Activated CD4-positive, alpha-beta memory T cell treated with anti-CD3 and anti-CD28 coated beads, Interleukin-2, amount 10 ng/mL, durations not matched to agents 7 days and 5 days (primary cell): ENCODE measurements at regions of chr5 and their contacts with region 1.

Region 1: GRCh38 chr5:140346348-140347101 is at the start of gene HBEGF:
- DNase-seq: peak; percentile 63
- H3K4me3 Mint-ChIP-seq: peak within 1 kb of the TSS; percentile 96
- H3K27ac Mint-ChIP-seq: peak within 1 kb of the TSS; percentile 94
- H3K4me1 Mint-ChIP-seq: peaks cover 64% of the 10 kb centered on the region
- H3K27me3 Mint-ChIP-seq: peaks cover 3% of the 10 kb centered on the region
- total RNA-seq, gene HBEGF: 67.9 to 69.1 TPM

Region 2: DNA sequence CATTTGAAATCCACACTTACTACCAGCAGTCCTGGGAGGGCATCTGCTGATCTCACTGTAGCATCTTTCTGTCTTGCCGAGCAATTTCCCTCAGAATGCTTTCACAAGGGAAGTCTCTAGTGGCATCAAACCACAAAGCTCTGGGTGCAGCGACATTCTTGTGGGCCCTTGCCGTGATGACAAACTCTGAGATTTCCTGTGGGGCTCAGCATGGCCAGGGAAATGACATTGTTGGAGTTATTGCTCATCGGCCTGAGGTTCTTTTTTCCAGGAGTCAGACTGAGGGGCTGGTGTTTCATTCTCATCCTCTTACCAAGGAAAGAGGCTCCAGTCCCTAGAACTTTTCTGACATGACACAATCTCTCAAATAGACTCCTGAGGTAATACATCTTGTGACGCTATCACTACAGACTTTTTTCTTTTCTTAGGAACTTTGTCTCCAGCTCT is 95.0 kb before region 1 on chr5:
- CTCF ChIA-PET with region 1: interaction called, 951 read pairs
- POLR2A ChIA-PET with region 1: interaction called, 40 read pairs
- DNase-seq: peak; percentile 86
- H3K4me3 Mint-ChIP-seq: peak overlapping the region; percentile 48
- H3K27ac Mint-ChIP-seq: peak overlapping the region; percentile 94
- H3K4me1 Mint-ChIP-seq: peaks cover 34% of the 10 kb centered on the region
- H3K27me3 Mint-ChIP-seq: no peaks in the 10 kb centered on the region

Region 3: GRCh38 chr5:140322751-140323731 is 23.5 kb before region 1 on chr5:
- CTCF ChIA-PET with region 1: interaction called, 11 read pairs
- POLR2A ChIA-PET with region 1: no interaction called
- DNase-seq: no peak
- H3K4me3 Mint-ChIP-seq: no peak overlapping the region
- H3K27ac Mint-ChIP-seq: no peak overlapping the region
- H3K4me1 Mint-ChIP-seq: no peaks in the 10 kb centered on the region
- H3K27me3 Mint-ChIP-seq: peaks cover 5% of the 10 kb centered on the region

Region 4: DNA sequence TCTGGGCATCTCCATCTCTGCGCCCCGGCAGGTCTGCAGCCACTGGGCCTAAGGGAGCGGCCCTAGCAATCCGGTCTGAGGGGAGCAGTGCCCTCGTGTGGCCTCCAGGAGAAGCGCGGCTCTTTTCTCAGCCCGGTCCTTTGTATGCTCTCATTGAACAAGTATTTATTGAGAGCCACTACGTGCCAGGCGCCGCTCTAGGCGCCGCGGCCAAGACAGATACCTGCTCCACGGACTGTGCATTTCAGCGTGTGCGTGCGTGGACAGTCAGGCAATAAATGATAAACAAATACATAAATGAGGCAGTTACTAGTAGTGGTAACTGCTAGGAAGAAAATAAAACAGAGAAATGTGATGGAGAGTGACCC is 11.2 kb after region 1 on chr5:
- CTCF ChIA-PET with region 1: interaction called, 71 read pairs
- POLR2A ChIA-PET with region 1: interaction called, 4 read pairs
- DNase-seq: peak; percentile 87
- H3K4me3 Mint-ChIP-seq: peak overlapping the region; percentile 71
- H3K27ac Mint-ChIP-seq: peak overlapping the region; percentile 61
- H3K4me1 Mint-ChIP-seq: peaks cover 25% of the 10 kb centered on the region
- H3K27me3 Mint-ChIP-seq: peaks cover 5% of the 10 kb centered on the region

Region 5: DNA sequence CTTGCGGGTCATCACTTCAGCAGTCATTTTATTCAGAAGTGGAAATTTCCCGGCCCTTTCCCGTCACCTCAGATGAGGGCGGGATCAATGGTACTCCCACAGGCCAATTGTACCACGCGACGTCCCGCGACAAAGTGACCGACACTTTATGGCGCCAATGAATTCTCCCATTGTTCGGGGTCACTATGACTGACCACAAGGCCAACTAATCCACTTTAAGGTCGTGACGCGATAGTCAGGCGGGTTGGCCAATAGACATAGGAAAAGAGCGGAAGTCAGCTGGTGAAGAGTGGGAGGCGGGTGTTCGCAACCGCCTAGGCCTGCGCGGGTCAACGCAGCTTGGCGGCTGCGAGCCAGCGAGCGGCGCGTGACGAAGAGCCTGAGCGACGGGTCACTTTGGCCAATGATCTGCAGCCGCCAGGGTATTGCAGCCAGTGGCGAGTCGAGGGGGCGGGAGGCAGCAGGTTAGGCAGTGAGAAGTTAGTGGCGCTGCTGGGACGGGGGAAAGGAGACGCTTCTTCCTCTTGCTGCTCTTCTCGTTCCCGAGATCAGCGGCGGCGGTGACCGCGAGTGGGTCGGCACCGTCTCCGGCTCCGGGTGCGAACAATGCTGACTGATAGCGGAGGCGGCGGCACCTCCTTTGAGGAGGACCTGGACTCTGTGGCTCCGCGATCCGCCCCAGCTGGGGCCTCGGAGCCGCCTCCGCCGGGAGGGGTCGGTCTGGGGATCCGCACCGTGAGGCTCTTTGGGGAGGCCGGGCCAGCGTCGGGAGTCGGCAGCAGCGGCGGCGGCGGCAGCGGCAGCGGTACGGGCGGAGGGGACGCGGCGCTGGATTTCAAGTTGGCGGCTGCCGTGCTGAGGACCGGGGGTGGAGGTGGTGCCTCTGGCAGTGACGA is 55.1 kb after region 1 on chr5 and contains the start of gene ANKHD1:
- CTCF ChIA-PET with region 1: interaction called, 7 read pairs
- POLR2A ChIA-PET with region 1: interaction called, 10 read pairs
- DNase-seq: peak; percentile 98
- H3K4me3 Mint-ChIP-seq: no peak within 1 kb of the TSS
- H3K27ac Mint-ChIP-seq: peak within 1 kb of the TSS; percentile 76
- H3K4me1 Mint-ChIP-seq: peaks cover 34% of the 10 kb centered on the region
- H3K27me3 Mint-ChIP-seq: no peaks in the 10 kb centered on the region
- total RNA-seq, gene ANKHD1: 109 to 122 TPM